ENCODE measurements at regions of chrX and their contacts with region 1.

Region 1: DNA sequence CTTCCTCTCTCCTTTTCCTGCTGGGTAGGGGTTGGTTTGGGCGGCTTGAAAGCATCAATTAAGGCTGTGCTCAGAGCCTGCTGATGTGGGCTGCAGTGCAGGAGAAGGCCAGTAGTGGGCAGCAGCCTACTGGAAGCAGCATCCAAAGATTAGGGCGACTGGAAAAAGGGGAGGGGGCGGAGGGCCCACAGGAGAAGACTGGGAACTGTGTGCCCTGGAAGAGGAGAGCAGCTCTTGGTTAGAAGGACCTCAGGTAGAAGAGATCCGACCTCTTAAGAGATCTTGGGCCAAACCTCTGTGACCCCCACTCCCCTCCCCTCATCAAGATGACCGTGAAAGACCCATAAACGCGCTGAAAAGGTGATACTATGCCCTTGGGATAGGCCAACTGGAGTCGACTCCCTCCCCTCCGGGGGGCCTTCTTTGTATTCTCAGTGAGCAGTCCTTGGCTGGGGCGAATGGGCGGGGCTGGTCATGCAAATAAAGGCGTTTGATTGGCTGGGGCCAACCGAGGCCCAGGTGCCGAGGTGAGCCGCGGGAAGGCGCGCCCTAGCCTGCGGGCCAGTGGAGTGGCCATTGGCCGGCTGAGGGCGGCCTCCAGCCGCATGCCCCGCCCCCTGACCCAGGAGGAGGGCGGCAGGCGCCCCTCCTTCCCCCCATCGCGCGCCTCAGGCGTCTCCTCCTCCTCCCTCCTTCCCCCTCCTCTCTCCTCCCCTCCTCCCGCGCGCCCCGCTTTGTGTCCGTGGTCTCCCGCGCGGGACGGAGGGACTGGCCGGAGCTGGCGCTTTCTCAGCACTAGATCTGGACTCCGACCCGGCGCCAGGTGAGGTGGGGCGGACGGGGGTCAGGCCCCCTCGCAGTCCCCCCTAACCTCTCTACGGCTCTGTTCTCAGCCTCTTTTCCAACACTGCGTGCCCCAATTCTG is 10.1 kb downstream of the DLG3 start:
- DNase-seq: peak; percentile 82
- ATAC-seq: peak; percentile 88
- H3K4me3 ChIP-seq: peak overlapping the region; percentile 67 to 73
- H3K27ac ChIP-seq: peak overlapping the region; percentile 90
- H3K4me1 ChIP-seq: peaks cover 10 to 32% of the 10 kb centered on the region in 2 experiments
- H3K27me3 ChIP-seq: no peaks in the 10 kb centered on the region
- CTCF ChIP-seq: peak in 2 of 3 experiments; percentile 88; a peak in 4 of 6 replicates
- POLR2A ChIP-seq: no peak
- RAD21 ChIP-seq: no peak

Region 2: GRCh38 chrX:70476934-70477733 is 22.4 kb after region 1 on chrX:
- CTCF ChIA-PET with region 1: interaction called, 4 read pairs
- POLR2A ChIA-PET with region 1: no interaction called
- RAD21 ChIA-PET with region 1: no interaction called
- intact Hi-C with region 1: loop called (anchors 2 kb)
- DNase-seq: peak; percentile 78
- ATAC-seq: peak; percentile 91
- H3K4me3 ChIP-seq: peak overlapping the region in 1 of 2 experiments; percentile 44; a peak in 3 of 4 replicates
- H3K27ac ChIP-seq: peak overlapping the region; percentile 27; the same call in 1 of the 2 replicates
- H3K4me1 ChIP-seq: peaks cover 62 to 81% of the 10 kb centered on the region in 2 experiments
- H3K27me3 ChIP-seq: no peaks in the 10 kb centered on the region
- CTCF ChIP-seq: no peak
- POLR2A ChIP-seq: no peak
- RAD21 ChIP-seq: no peak

Region 3: GRCh38 chrX:70554081-70554480 is 99.4 kb after region 1 on chrX:
- CTCF ChIA-PET with region 1: interaction called, 4 read pairs
- POLR2A ChIA-PET with region 1: no interaction called
- RAD21 ChIA-PET with region 1: no interaction called
- intact Hi-C with region 1: loop called (anchors 5 kb)
- DNase-seq: no peak
- ATAC-seq: no peak
- H3K4me3 ChIP-seq: no peak overlapping the region
- H3K27ac ChIP-seq: no peak overlapping the region
- H3K4me1 ChIP-seq: peaks cover 0 to 3% of the 10 kb centered on the region in 2 experiments; a peak in 2 of 4 replicates
- H3K27me3 ChIP-seq: no peaks in the 10 kb centered on the region
- CTCF ChIP-seq: peak in 1 of 3 experiments; percentile 50; a peak in 1 of 6 replicates
- POLR2A ChIP-seq: no peak
- RAD21 ChIP-seq: peak; percentile 64

Region 4: GRCh38 chrX:70635227-70635626 is 180.5 kb after region 1 on chrX:
- CTCF ChIA-PET with region 1: no interaction called
- POLR2A ChIA-PET with region 1: no interaction called
- RAD21 ChIA-PET with region 1: no interaction called
- intact Hi-C with region 1: no loop called
- DNase-seq: no peak
- ATAC-seq: no peak
- H3K4me3 ChIP-seq: no peak overlapping the region
- H3K27ac ChIP-seq: no peak overlapping the region
- H3K4me1 ChIP-seq: no peaks in the 10 kb centered on the region
- H3K27me3 ChIP-seq: no peaks in the 10 kb centered on the region
- CTCF ChIP-seq: no peak
- POLR2A ChIP-seq: no peak
- RAD21 ChIP-seq: no peak

Region 5: DNA sequence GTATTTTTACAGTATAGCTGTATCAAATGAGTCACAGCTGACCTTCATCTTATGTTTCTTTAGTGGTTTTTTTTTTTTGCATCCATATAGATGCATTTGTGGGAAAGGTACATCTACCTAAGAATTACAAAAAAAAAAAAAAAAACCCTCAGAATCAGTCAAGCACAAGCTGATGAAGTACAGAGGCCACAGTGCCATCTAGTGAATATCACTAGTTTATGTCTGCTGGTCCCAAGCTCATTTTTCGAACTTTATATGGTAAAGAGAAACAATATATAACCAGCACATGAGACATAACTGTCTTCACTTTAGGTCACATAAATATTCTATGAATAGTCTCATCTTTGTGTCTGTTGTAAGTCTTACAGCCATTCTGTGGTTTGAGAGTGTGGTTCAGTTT is 210.0 kb after region 1 on chrX:
- CTCF ChIA-PET with region 1: interaction called, 17 read pairs
- POLR2A ChIA-PET with region 1: interaction called, 4 read pairs
- RAD21 ChIA-PET with region 1: interaction called, 3 read pairs
- intact Hi-C with region 1: loop called (anchors 1 kb)
- DNase-seq: peak; percentile 16
- ATAC-seq: peak; percentile 54; the same call in 1 of the 2 replicates
- H3K4me3 ChIP-seq: no peak overlapping the region
- H3K27ac ChIP-seq: no peak overlapping the region
- H3K4me1 ChIP-seq: no peaks in the 10 kb centered on the region
- H3K27me3 ChIP-seq: no peaks in the 10 kb centered on the region
- CTCF ChIP-seq: peak; percentile 20 to 44 (median 35); a peak in 4 of 6 replicates
- POLR2A ChIP-seq: no peak
- RAD21 ChIP-seq: peak; percentile 70

Region 6: GRCh38 chrX:70769659-70770232 is 315.0 kb after region 1 on chrX:
- CTCF ChIA-PET with region 1: no interaction called
- POLR2A ChIA-PET with region 1: no interaction called
- RAD21 ChIA-PET with region 1: no interaction called
- intact Hi-C with region 1: loop called (anchors 10 kb)
- DNase-seq: no peak
- ATAC-seq: peak; percentile 34; the same call in 1 of the 2 replicates
- H3K4me3 ChIP-seq: no peak overlapping the region
- H3K27ac ChIP-seq: no peak overlapping the region
- H3K4me1 ChIP-seq: no peaks in the 10 kb centered on the region
- H3K27me3 ChIP-seq: no peaks in the 10 kb centered on the region
- CTCF ChIP-seq: peak in 2 of 3 experiments; percentile 37 to 44; a peak in 2 of 6 replicates
- POLR2A ChIP-seq: no peak
- RAD21 ChIP-seq: peak; percentile 57